ENCODE measurements at regions of chr5 and their contacts with region 1.

Region 1: DNA sequence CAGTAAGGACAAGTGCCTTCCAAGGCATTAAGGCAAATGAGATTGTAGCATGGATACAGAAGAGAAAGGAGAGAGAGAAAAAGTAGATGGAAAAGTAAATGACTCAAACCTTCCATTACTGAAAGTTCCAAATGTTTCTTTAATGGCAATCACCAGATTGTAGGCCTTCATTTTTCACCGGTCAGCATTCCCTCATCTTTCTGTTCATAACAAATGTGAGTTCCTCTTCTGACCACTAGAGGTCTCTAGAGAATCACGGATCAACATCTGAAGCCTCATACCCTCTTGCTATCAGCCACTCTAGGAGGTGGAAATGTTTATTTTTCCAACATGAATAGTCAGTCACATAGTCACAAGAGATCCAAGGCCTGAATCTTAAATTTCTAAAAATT is 73.6 kb upstream of the RPS23 start:
- DNase-seq: peak; percentile 85
- ATAC-seq: peak; percentile 81
- H3K4me3 ChIP-seq: no peak overlapping the region
- H3K27ac ChIP-seq: peak overlapping the region; percentile 90
- H3K4me1 ChIP-seq: peaks cover 17% of the 10 kb centered on the region
- H3K27me3 ChIP-seq: no peaks in the 10 kb centered on the region
- CTCF ChIP-seq: peak; percentile 89

Region 2: GRCh38 chr5:82312373-82312856 is 39.3 kb before region 1 on chr5:
- CTCF ChIA-PET with region 1: no interaction called
- POLR2A ChIA-PET with region 1: no interaction called
- intact Hi-C with region 1: loop called (anchors 2 kb)
- DNase-seq: peak; percentile 83
- ATAC-seq: peak; percentile 90
- H3K4me3 ChIP-seq: no peak overlapping the region
- H3K27ac ChIP-seq: no peak overlapping the region
- H3K4me1 ChIP-seq: no peaks in the 10 kb centered on the region
- H3K27me3 ChIP-seq: no peaks in the 10 kb centered on the region
- CTCF ChIP-seq: peak; percentile 96

Region 3: DNA sequence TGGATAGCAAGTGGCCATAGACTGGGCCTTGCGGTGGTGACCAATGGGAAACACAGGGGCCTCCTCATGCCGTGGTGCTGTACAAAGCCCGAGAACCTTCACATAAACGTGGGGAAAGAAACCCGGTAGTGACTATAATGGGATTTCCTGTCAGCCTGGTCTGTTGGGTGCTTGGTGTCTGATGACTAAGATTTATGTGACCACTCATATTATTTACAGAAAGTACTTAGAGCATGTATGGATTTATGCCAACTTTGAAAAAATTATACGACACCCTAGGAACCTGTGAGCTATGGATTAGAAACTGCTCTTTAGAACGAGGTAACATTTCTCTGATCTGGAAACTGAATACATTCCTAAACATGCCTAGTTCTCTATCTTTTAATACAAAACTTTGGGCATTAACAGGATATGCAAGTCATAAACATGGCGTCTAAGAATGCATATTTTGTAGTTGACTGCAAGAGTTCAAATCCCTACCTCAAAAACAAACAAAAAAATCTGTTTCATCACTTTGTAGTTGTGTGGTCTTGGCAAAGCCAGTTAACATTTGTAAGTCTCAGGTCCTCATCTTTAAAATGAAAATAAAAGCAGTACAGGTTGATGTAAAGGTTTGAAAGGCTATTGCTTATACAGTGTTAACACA is 640.1 kb after region 1 on chr5:
- CTCF ChIA-PET with region 1: no interaction called
- POLR2A ChIA-PET with region 1: no interaction called
- intact Hi-C with region 1: loop called (anchors 10 kb)
- DNase-seq: peak; percentile 91
- ATAC-seq: peak; percentile 99
- H3K4me3 ChIP-seq: no peak overlapping the region
- H3K27ac ChIP-seq: peak overlapping the region; percentile 80
- H3K4me1 ChIP-seq: peaks cover 21% of the 10 kb centered on the region
- H3K27me3 ChIP-seq: no peaks in the 10 kb centered on the region
- CTCF ChIP-seq: no peak

Region 4: GRCh38 chr5:83095957-83096539 is 744.3 kb after region 1 on chr5:
- CTCF ChIA-PET with region 1: no interaction called
- POLR2A ChIA-PET with region 1: no interaction called
- intact Hi-C with region 1: loop called (anchors 10 kb)
- DNase-seq: peak; percentile 89
- ATAC-seq: peak; percentile 97
- H3K4me3 ChIP-seq: no peak overlapping the region
- H3K27ac ChIP-seq: peak overlapping the region; percentile 38; the same call in 1 of the 2 replicates
- H3K4me1 ChIP-seq: peaks cover 39% of the 10 kb centered on the region
- H3K27me3 ChIP-seq: no peaks in the 10 kb centered on the region
- CTCF ChIP-seq: no peak